Activated CD4-positive, alpha-beta T cell treated with anti-CD3 and anti-CD28 coated beads, Interleukin-2, amount 10 ng/mL, durations not matched to agents 7 days and 5 days (primary cell): ENCODE measurements at regions of chr10 and their contacts with region 1.

Region 1: DNA sequence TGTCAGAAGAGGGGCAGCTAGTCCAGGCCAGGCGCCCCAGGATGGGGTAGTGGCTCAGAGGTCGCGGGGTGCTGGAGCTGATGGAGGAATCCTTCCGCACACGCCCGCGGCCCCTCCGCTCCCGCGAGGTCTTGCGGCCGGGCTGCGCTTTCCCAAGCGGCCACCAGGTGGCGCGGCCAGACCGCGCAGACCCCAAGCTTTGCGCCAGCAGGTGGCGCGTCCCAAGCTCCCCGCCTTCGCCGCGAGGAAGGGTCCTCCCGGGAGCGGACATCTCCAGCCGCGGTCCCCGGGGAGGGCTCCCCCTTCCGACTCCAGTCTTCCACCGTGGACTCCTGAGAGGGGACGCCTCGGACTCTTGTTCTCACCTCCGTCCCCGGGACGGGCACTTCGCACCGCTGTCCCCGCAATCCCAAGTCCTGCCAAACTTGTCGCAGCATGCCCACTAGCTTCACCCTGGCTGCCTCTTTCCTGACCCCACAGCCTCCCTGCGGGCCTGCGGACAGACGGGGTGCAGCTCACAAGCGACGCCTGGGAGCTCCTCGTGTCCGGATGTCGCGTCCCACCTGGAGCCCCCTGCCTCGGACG is 19.4 kb downstream of the KCNK18 start:
- DNase-seq: peak; percentile 65
- H3K4me3 Mint-ChIP-seq: peak overlapping the region; percentile 71
- H3K27ac Mint-ChIP-seq: peak overlapping the region; percentile 46
- H3K4me1 Mint-ChIP-seq: peaks cover 7% of the 10 kb centered on the region
- H3K27me3 Mint-ChIP-seq: peaks cover 29% of the 10 kb centered on the region

Region 2: GRCh38 chr10:117163061-117163953 is 53.4 kb before region 1 on chr10:
- CTCF ChIA-PET with region 1: no interaction called
- POLR2A ChIA-PET with region 1: no interaction called
- DNase-seq: no peak
- H3K4me3 Mint-ChIP-seq: no peak overlapping the region
- H3K27ac Mint-ChIP-seq: no peak overlapping the region
- H3K4me1 Mint-ChIP-seq: peaks cover 14% of the 10 kb centered on the region
- H3K27me3 Mint-ChIP-seq: peaks cover 84% of the 10 kb centered on the region

Region 3: DNA sequence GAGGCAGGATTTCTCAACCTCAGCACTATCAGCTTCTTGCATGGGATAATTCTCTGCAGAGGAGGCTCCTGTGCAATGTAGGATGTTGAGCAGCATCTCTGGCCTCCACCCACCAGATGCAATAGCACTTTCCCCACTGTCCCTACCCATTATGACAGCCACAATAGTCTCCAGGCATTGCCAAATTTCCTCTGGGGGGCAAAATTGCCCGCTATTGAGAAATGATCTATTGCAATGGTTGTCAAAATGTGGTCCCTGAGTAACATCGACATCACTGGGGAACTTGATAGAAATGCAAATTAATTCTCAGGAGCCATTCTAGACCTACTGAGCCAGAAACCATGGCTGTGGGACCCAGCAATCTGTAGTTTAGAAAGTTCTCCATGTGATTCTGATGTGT is 12.4 kb before region 1 on chr10:
- CTCF ChIA-PET with region 1: interaction called, 18 read pairs
- POLR2A ChIA-PET with region 1: no interaction called
- DNase-seq: no peak
- H3K4me3 Mint-ChIP-seq: no peak overlapping the region
- H3K27ac Mint-ChIP-seq: no peak overlapping the region
- H3K4me1 Mint-ChIP-seq: no peaks in the 10 kb centered on the region
- H3K27me3 Mint-ChIP-seq: peaks cover 2% of the 10 kb centered on the region

Region 4: GRCh38 chr10:117237401-117237991 is 20.8 kb after region 1 on chr10:
- CTCF ChIA-PET with region 1: no interaction called
- POLR2A ChIA-PET with region 1: no interaction called
- DNase-seq: no peak
- H3K4me3 Mint-ChIP-seq: no peak overlapping the region
- H3K27ac Mint-ChIP-seq: no peak overlapping the region
- H3K4me1 Mint-ChIP-seq: peaks cover 4% of the 10 kb centered on the region
- H3K27me3 Mint-ChIP-seq: peaks cover 19% of the 10 kb centered on the region

Region 5: DNA sequence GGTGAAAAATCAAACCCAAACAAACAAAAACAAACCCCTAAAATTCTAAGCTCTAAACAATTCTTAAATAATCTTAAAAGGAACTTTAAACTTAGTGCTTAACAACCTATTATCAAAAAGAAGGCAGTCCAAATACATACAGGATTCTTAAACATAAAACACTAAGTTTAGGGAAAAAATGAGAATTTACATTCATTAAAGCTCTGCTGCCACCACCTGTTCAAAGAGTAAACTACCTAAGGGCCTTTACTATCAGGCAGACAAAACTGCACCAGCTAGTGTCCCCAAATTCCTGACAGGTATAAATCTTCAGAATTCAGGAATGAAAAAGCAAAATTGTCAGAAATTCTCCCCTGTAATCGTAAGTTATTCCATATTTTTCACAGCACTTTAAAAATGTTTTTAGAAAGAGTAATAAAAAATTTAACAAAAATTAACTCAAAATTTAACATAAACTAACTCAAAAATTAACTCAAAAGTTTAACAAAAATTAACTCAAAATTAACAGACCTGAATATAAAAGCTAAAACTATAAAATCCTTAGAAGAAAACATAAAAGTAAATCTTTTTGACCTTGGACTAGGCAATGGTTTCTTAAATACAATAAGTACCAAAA is 103.5 kb after region 1 on chr10:
- CTCF ChIA-PET with region 1: interaction called, 27 read pairs
- POLR2A ChIA-PET with region 1: no interaction called
- DNase-seq: peak; percentile 12
- H3K4me3 Mint-ChIP-seq: no peak overlapping the region
- H3K27ac Mint-ChIP-seq: no peak overlapping the region
- H3K4me1 Mint-ChIP-seq: no peaks in the 10 kb centered on the region
- H3K27me3 Mint-ChIP-seq: no peaks in the 10 kb centered on the region

Region 6: GRCh38 chr10:117370205-117370604 is 153.5 kb after region 1 on chr10:
- CTCF ChIA-PET with region 1: interaction called, 12 read pairs
- POLR2A ChIA-PET with region 1: no interaction called
- DNase-seq: no peak
- H3K4me3 Mint-ChIP-seq: no peak overlapping the region
- H3K27ac Mint-ChIP-seq: no peak overlapping the region
- H3K4me1 Mint-ChIP-seq: peaks cover 39% of the 10 kb centered on the region
- H3K27me3 Mint-ChIP-seq: no peaks in the 10 kb centered on the region